GM18951 (cell line): ENCODE measurements at regions of chr1 and their contacts with region 1.

Region 1: GRCh38 chr1:101288491-101288944 is 51.7 kb downstream of the S1PR1 start:
- POLR2A ChIP-seq: no peak

Region 2: GRCh38 chr1:100816049-100816448 is 472.5 kb before region 1 on chr1:
- in situ Hi-C with region 1: no loop called
- POLR2A ChIP-seq: no peak

Region 3: DNA sequence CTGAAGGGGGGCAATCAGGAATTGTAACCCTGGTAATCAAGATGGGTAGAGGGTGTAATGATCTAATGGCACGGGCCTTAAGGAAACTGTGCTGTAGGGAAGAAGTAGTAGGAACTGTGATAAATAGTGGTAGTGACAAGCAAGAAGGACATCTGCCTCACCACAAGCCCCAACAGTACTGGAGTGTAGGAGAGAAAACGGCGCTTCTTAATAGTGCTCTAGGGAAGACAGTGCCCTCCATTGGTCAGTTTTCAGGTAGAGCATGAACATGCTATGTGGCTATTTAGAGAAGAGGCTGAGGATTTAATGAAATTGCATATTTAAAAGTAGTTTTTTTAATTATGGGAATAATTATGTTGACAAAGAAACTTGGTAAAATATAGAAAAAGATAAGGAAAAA is 360.4 kb before region 1 on chr1:
- in situ Hi-C with region 1: loop called (anchors 5 kb)
- POLR2A ChIP-seq: no peak

Region 4: DNA sequence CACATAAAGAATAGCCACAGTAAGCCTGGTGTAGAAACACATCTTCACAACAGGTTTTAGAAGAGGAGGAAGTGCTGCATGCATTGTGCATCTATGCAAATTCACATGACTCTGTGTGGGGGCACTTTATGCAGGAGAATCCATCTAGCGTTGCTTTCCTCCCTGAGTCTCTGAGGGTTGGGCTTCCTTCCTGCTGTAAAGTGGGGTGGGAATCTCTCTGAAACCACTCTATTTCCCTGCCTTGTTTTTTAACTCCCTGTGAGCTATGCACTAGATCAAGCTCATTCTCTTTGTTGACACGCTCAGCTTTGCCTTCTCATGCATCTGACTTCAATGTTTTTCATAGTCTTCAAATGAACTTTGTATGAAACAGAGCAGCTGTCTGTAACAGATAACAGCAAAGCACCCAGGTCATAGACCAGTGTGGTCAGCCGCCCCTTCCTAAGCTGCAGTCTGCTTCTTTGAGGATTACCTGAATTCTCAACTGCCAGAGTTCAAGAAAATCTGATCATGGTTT is 160.2 kb before region 1 on chr1:
- in situ Hi-C with region 1: loop called (anchors 10 kb)
- POLR2A ChIP-seq: no peak